ENCODE measurements at regions of chr2 and their contacts with region 1.

Region 1: DNA sequence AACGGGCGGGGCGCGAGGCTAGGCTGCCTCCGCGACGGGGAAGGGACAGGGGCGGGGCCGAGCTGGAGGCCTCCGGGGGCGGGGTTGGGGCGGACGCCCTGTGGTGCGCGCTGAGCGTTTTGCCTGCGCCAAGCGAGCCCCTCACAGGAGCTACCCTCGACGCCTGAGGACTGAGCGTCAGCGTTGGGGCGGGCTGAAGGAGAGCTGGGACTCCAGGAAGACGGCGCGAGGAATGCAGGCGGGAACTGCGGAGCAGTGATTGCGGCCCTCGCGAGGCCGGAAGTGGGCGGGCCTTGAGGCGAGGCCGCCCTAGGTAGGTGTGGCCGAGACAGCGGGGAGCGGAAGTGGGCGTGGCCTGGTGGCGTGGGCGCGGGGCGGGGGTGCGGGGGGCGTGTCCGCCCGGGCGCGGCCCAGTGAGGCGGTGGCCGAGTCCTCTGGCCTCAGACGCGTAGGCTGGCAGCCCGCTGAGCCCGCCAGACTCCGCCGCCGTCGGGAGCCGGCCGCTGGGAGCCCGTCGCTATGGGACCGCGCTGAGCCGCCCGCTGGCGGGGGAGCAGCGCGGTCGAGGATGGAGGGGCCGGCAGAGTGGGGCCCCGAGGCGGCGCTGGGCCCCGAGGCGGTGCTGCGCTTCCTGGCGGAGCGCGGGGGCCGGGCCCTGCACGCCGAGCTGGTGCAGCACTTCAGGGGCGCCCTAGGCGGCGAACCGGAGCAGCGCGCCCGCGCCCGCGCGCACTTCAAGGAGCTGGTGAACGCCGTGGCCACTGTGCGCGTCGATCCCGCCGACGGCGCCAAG is at the starts of genes SEPTIN10 and SOWAHC:
- DNase-seq: peak; percentile 97
- ATAC-seq: peak; percentile 91
- H3K4me3 ChIP-seq: peak within 1 kb of the TSS; percentile 92 to 98
- H3K27ac ChIP-seq: peak within 1 kb of the TSS; percentile 78
- H3K4me1 ChIP-seq: peaks cover 29 to 51% of the 10 kb centered on the region in 2 experiments
- H3K27me3 ChIP-seq: no peaks in the 10 kb centered on the region
- CTCF ChIP-seq: no peak
- POLR2A ChIP-seq: peak; percentile 51
- RAD21 ChIP-seq: no peak
- total RNA-seq, gene SEPTIN10: 113 TPM
- total RNA-seq, gene SOWAHC: 16.6 TPM

Region 2: GRCh38 chr2:109545828-109546713 is 68.0 kb before region 1 on chr2:
- CTCF ChIA-PET with region 1: interaction called, 14 read pairs
- POLR2A ChIA-PET with region 1: no interaction called
- RAD21 ChIA-PET with region 1: interaction called, 3 to 6 read pairs
- intact Hi-C with region 1: loop called (anchors 5 kb)
- DNase-seq: peak; percentile 28
- ATAC-seq: peak; percentile 95
- H3K4me3 ChIP-seq: no peak overlapping the region
- H3K27ac ChIP-seq: no peak overlapping the region
- H3K4me1 ChIP-seq: peaks cover 0 to 3% of the 10 kb centered on the region in 2 experiments; a peak in 1 of 4 replicates
- H3K27me3 ChIP-seq: no peaks in the 10 kb centered on the region
- CTCF ChIP-seq: peak; percentile 76 to 82 (median 77)
- POLR2A ChIP-seq: no peak
- RAD21 ChIP-seq: peak; percentile 87

Region 3: GRCh38 chr2:109558076-109558882 is 55.8 kb before region 1 on chr2:
- CTCF ChIA-PET with region 1: no interaction called
- POLR2A ChIA-PET with region 1: no interaction called
- RAD21 ChIA-PET with region 1: no interaction called
- intact Hi-C with region 1: no loop called
- DNase-seq: peak; percentile 68
- ATAC-seq: peak; percentile 81
- H3K4me3 ChIP-seq: no peak overlapping the region
- H3K27ac ChIP-seq: peak overlapping the region; percentile 23; the same call in 1 of the 2 replicates
- H3K4me1 ChIP-seq: peaks cover 14 to 57% of the 10 kb centered on the region in 2 experiments
- H3K27me3 ChIP-seq: no peaks in the 10 kb centered on the region
- CTCF ChIP-seq: no peak
- POLR2A ChIP-seq: no peak
- RAD21 ChIP-seq: no peak

Region 4: DNA sequence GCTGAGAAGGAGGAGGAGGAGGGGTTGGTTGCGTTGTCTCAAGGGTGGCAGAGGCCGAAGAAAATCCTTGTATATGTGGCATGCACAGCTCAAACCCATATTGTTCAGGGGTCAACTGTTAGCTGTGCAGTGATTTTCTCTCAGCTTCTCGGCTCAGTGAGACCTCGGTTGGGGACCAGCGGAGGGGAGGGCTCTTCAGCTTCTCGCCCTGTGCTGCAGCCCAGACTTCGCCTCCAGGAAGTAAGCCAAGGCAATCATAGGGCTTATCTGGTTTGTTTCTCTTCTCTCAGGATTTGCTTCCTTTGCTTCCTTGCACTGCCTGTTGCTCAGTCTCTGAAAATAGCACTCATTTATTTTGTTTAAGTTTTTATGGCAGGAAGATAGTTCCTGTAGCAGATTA is 85.5 kb after region 1 on chr2:
- CTCF ChIA-PET with region 1: no interaction called
- POLR2A ChIA-PET with region 1: no interaction called
- RAD21 ChIA-PET with region 1: no interaction called
- intact Hi-C with region 1: loop called (anchors 2 kb)
- DNase-seq: no peak
- ATAC-seq: no peak
- H3K4me3 ChIP-seq: no peak overlapping the region
- H3K27ac ChIP-seq: no peak overlapping the region
- H3K4me1 ChIP-seq: peaks cover 19 to 45% of the 10 kb centered on the region in 2 experiments
- H3K27me3 ChIP-seq: no peaks in the 10 kb centered on the region
- CTCF ChIP-seq: no peak
- POLR2A ChIP-seq: no peak
- RAD21 ChIP-seq: no peak